Naive thymus-derived CD8-positive, alpha-beta T cell (primary cell): ENCODE measurements at regions of chr6 and their contacts with region 1.

Region 1: DNA sequence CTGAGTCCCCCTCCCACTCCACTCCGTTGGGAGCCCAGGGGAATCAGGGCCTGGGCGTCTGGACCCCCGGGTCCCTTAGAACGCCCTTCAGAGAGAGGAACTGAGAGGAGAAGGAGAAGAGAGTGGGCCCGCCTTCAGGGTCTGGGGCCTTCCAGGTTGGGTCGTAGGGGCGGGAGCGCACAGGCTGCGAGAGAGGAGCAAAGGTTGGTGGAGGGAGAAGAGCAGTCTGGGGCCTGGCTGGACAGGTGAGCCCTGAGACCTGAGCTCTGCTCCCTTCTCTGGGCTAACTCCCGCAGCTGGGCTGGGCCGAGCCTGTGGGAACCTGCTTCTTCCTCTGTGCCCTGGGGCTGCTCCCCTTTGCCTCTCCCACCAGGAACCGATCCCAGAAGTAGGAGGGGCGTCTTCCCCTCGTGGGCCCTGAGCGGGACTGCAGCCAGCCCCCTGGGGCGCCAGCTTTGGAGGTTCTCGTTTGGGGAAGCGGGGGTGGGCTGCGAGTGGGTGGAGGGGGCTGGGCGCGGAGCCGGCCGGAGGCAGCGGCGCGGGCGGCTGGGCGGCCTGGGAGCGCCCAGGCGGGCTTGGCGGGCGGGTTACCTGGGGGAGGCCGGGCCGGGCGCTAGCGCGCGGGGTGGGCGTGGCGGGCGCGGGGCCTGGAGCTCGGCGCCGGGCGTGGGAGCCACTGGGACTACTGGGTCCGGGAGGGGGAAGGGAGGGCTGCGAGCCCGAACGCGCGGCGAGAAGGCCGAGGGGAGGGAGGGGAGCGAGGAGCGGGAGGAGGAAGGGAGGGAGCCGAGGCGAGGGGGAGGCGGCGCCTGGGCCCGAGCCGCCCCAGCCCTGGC is at the start of gene DDR1:
- DNase-seq: peak in 8 of 10 donors; percentile 23 to 71 (median 36)
- ATAC-seq: peak; percentile 62 to 65
- H3K4me3 Mint-ChIP-seq: peak within 1 kb of the TSS; percentile 70 to 94 (median 86)
- H3K27ac Mint-ChIP-seq: peak within 1 kb of the TSS; percentile 58 to 93 (median 88)
- H3K4me1 Mint-ChIP-seq: peaks cover 26 to 44% (median 34%) of the 10 kb centered on the region in 4 donors
- H3K27me3 Mint-ChIP-seq: no peaks in the 10 kb centered on the region
- polyA plus RNA-seq, gene DDR1: 0.57 to 5.4 (median 1.5) TPM

Region 2: GRCh38 chr6:30907758-30908591 is 24.1 kb after region 1 on chr6 and contains the start of gene GTF2H4:
- POLR2A ChIA-PET with region 1: interaction called, 22 read pairs
- DNase-seq: peak; percentile 83 to 96 (median 92)
- ATAC-seq: peak; percentile 97 to 99
- H3K4me3 Mint-ChIP-seq: peak within 1 kb of the TSS; percentile 97 to 100 (median 99)
- H3K27ac Mint-ChIP-seq: peak within 1 kb of the TSS; percentile 54 to 93 (median 86)
- H3K4me1 Mint-ChIP-seq: peaks cover 20 to 30% (median 26%) of the 10 kb centered on the region in 4 donors
- H3K27me3 Mint-ChIP-seq: no peaks in the 10 kb centered on the region
- polyA plus RNA-seq, gene GTF2H4: 5.1 to 8.3 (median 6.3) TPM